ENCODE measurements at regions of chr5 and their contacts with region 1.

Region 1: DNA sequence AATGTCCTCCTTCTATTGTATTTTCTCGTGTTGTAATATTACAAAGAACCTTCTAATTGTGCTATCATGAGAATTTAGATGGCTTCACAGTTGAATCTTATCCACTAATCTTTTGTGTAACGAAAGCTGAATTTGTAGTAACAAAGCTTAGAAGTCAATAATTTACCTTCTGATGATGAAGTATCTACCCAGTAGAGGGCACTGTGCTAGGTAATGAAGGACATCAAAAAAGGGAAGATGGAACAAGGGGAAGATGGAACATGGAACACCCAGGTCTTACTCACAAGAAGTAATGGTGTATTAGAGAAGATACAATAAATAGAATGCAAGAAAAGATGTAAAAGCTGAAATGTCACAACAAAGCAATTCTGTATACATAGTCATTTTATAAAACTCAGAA is 131.0 kb upstream of the CCNG1 start:
- DNase-seq: no peak
- H3K4me3 ChIP-seq: no peak overlapping the region
- H3K27ac ChIP-seq: no peak overlapping the region
- H3K4me1 ChIP-seq: no peaks in the 10 kb centered on the region
- H3K27me3 ChIP-seq: no peaks in the 10 kb centered on the region
- CTCF ChIP-seq: peak; percentile 27

Region 2: GRCh38 chr5:163408311-163408923 is 102.0 kb after region 1 on chr5:
- intact Hi-C with region 1: loop called (anchors 5 kb)
- DNase-seq: peak; percentile 69
- H3K4me3 ChIP-seq: no peak overlapping the region
- H3K27ac ChIP-seq: no peak overlapping the region
- H3K4me1 ChIP-seq: no peaks in the 10 kb centered on the region
- H3K27me3 ChIP-seq: no peaks in the 10 kb centered on the region
- CTCF ChIP-seq: peak; percentile 86